ENCODE measurements at regions of chr6 and their contacts with region 1.

Region 1: GRCh38 chr6:38493931-38494547 is 145.7 kb downstream of the BTBD9 start:
- DNase-seq: peak; percentile 85
- H3K4me3 ChIP-seq: no peak overlapping the region
- H3K27ac ChIP-seq: no peak overlapping the region
- H3K4me1 ChIP-seq: no peaks in the 10 kb centered on the region
- H3K27me3 ChIP-seq: no peaks in the 10 kb centered on the region
- CTCF ChIP-seq: peak; percentile 94

Region 2: GRCh38 chr6:37777272-37777834 is 716.7 kb before region 1 on chr6:
- intact Hi-C with region 1: loop called (anchors 10 kb)
- DNase-seq: no peak
- H3K4me3 ChIP-seq: no peak overlapping the region
- H3K27ac ChIP-seq: no peak overlapping the region
- H3K4me1 ChIP-seq: no peaks in the 10 kb centered on the region
- H3K27me3 ChIP-seq: no peaks in the 10 kb centered on the region
- CTCF ChIP-seq: no peak